ENCODE measurements at regions of chr2 and their contacts with region 1.

Region 1: GRCh38 chr2:20617892-20618467 is 32.9 kb downstream of the HS1BP3 start:
- DNase-seq: peak; percentile 76
- H3K4me3 ChIP-seq: no peak overlapping the region
- H3K27ac ChIP-seq: no peak overlapping the region
- H3K4me1 ChIP-seq: peaks cover 27% of the 10 kb centered on the region
- H3K27me3 ChIP-seq: no peaks in the 10 kb centered on the region
- CTCF ChIP-seq: peak; percentile 21 to 32

Region 2: GRCh38 chr2:20568501-20569463 is 49.2 kb before region 1 on chr2:
- CTCF ChIA-PET with region 1: no interaction called
- dilution Hi-C with region 1: loop called (anchors 5 kb)
- in situ Hi-C with region 1: no loop called
- intact Hi-C with region 1: no loop called
- DNase-seq: peak; percentile 43
- H3K4me3 ChIP-seq: no peak overlapping the region
- H3K27ac ChIP-seq: no peak overlapping the region
- H3K4me1 ChIP-seq: peaks cover 17% of the 10 kb centered on the region
- H3K27me3 ChIP-seq: no peaks in the 10 kb centered on the region
- CTCF ChIP-seq: no peak

Region 3: DNA sequence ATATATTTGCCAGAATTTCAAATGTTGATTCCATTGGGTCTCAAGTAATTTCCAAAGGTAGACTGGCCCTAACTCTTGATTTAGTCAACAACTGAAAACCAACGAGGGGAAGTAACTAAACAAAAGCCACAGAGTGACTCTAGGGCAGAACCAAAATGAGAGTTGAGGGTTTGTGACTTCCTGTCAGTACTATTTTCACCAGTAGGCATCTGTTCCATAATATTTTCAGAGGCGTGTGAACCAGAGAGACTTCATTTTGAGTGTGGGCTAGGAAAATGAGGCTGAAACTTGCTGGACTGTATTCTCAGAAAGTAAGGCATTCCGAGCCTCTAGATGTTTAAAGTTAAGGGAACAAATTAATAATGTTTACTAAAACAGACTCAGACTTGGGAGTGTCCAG is 119.5 kb after region 1 on chr2:
- CTCF ChIA-PET with region 1: no interaction called
- dilution Hi-C with region 1: no loop called
- in situ Hi-C with region 1: no loop called
- intact Hi-C with region 1: no loop called
- DNase-seq: no peak
- H3K4me3 ChIP-seq: no peak overlapping the region
- H3K27ac ChIP-seq: no peak overlapping the region
- H3K4me1 ChIP-seq: no peaks in the 10 kb centered on the region
- H3K27me3 ChIP-seq: no peaks in the 10 kb centered on the region
- CTCF ChIP-seq: no peak

Region 4: GRCh38 chr2:20771299-20771698 is 153.3 kb after region 1 on chr2:
- CTCF ChIA-PET with region 1: no interaction called
- dilution Hi-C with region 1: no loop called
- in situ Hi-C with region 1: no loop called
- intact Hi-C with region 1: no loop called
- DNase-seq: no peak
- H3K4me3 ChIP-seq: no peak overlapping the region
- H3K27ac ChIP-seq: no peak overlapping the region
- H3K4me1 ChIP-seq: no peaks in the 10 kb centered on the region
- H3K27me3 ChIP-seq: no peaks in the 10 kb centered on the region
- CTCF ChIP-seq: no peak

Measured in mammary epithelial cell (primary cell).